ENCODE measurements at regions of chr7 and their contacts with region 1.

Region 1: DNA sequence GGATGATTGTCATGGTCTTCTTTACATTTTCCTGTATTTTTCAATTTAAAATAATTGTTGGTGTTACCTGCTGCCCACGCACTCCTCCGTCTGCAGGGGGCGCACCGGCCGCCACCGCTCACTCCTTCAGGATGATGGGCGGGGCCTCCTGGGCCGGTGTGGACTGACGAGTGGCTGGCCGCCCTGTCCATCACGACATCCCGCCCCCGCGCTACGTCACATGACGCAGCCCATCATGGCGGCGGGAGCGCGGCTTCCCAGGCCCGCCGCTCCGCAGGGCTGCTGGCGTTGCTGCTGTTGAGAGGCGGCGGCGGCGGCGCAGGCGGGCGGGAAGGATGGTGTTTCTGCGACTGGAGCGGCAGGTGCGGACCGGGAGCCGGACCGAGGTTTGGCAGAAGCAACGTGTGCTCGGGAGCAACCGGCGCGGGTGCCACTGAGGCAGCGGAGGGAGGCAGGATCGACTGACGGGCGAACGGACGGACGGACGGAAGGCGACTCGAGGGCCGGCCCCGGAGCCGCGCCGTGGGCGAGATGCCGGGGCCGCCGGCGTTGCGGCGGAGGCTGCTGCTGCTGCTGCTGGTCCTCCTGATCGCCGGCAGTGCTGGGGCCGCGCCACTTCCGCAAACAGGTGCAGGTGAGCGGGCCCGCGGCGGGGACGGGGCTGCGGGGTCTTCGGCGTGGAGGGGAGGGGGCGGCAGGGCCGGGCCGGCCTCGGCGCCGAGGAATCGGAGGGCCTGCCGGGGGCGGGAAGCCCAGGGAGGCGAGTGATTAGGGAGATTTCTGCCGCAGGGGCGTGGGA is at the start of gene LMTK2:
- H3K4me3 ChIP-seq: peak within 1 kb of the TSS; percentile 98
- H3K27ac ChIP-seq: peak within 1 kb of the TSS; percentile 84
- H3K4me1 ChIP-seq: peaks cover 21% of the 10 kb centered on the region
- CTCF ChIP-seq: peak; percentile 97

Region 2: DNA sequence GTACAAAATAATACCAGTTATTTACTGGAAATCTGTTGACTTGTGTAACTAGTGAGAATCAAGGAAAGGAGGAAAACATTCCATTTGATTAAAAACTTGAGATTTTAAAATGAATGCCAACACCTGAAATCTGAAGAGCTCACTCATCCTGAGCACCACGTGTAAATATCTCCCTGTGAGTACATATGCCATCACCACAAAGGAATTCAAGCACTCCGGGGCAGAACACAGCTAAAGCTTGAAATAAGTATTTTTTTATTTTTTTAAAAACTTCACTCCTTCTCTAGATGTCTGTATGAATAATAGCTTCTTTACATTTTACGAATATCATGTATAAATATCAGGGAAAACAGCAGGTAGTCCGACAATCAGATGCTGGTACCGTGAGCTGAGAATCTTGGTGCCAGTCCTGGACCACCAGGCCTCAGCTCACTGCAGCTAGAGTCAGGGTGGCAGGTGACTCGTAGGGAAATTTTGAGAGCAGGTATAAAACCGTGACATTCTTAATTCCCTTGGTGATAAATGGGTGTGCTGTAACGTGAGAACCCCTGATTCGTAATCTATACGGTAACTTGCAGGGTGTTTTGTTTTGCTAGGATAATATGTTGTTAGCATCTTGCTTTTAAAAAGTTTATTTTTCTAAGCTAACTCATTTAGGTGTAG is 12.5 kb after region 1 on chr7:
- CTCF ChIA-PET with region 1: interaction called, 21 read pairs
- POLR2A ChIA-PET with region 1: interaction called, 7 read pairs
- H3K4me3 ChIP-seq: no peak overlapping the region
- H3K27ac ChIP-seq: no peak overlapping the region
- H3K4me1 ChIP-seq: peaks cover 41% of the 10 kb centered on the region
- CTCF ChIP-seq: no peak

Measured in HEK293 (cell line).